Psoas muscle (tissue), 8 donors: ENCODE measurements at regions of chr17 and their contacts with region 1.

Region 1: GRCh38 chr17:68512247-68512982 is at the start of gene PRKAR1A:
- DNase-seq: peak; percentile 93 to 97
- ATAC-seq: peak; percentile 68 to 84 (median 82)
- H3K4me3 ChIP-seq: peak within 1 kb of the TSS; percentile 90
- H3K27ac ChIP-seq: peak within 1 kb of the TSS; percentile 98
- H3K4me1 ChIP-seq: peaks cover 29% of the 10 kb centered on the region
- H3K27me3 ChIP-seq: no peaks in the 10 kb centered on the region
- CTCF ChIP-seq: no peak
- total RNA-seq, gene PRKAR1A: 304 to 2,295 (median 488) TPM

Region 2: DNA sequence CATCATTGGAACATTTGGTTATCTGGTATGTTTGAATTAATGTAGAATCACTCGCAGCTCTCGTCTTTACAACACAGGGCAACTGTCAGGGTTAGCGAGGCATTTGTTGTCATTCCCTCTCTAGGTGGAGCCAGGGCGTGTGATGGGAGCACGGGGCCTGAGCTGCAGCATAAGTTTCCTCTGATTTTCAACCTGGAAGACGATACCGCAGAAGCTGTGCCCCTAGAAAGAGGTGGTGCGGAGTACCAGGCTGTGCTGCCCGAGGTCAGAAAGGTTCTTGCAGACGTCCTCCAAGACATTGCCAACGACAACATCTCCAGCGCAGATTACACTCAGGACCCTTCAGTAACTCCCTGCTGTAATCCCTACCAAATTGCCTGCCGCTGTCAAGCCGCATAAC is 92.3 kb before region 1 on chr17:
- intact Hi-C with region 1: no loop called
- DNase-seq: no peak
- ATAC-seq: no peak
- H3K4me3 ChIP-seq: no peak overlapping the region
- H3K27ac ChIP-seq: no peak overlapping the region
- H3K4me1 ChIP-seq: no peaks in the 10 kb centered on the region
- H3K27me3 ChIP-seq: no peaks in the 10 kb centered on the region
- CTCF ChIP-seq: no peak

Region 3: DNA sequence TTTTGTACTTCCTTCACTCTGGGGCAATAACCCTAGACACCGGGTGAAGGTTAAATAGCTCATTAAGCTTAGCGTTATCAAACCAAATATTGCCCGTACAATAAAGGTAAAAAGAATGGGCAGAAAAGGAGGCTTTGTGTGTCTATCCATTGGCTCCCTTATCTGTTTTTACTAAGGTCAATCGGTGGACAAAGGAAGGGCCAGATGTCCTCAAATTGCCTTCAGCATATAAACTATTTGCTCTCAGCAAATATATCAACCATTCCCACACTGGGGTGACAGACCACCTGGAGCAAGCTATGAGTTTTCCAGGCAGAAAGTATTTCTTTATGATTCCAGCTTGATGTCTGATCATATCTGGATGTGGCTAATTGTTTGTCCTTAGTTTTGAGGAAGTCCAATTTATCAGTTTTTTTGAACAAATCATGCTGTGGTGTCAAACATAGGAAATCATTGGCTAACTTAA is 29.8 kb before region 1 on chr17:
- intact Hi-C with region 1: loop called in 1 of 2 experiments (anchors 2 kb)
- DNase-seq: no peak
- ATAC-seq: no peak
- H3K4me3 ChIP-seq: no peak overlapping the region
- H3K27ac ChIP-seq: no peak overlapping the region
- H3K4me1 ChIP-seq: no peaks in the 10 kb centered on the region
- H3K27me3 ChIP-seq: no peaks in the 10 kb centered on the region
- CTCF ChIP-seq: no peak

Region 4: GRCh38 chr17:68704871-68705713 is 192.7 kb after region 1 on chr17:
- intact Hi-C with region 1: no loop called
- DNase-seq: peak in 1 of 2 donors; percentile 18
- ATAC-seq: peak; percentile 21 to 62 (median 44)
- H3K4me3 ChIP-seq: no peak overlapping the region
- H3K27ac ChIP-seq: no peak overlapping the region
- H3K4me1 ChIP-seq: no peaks in the 10 kb centered on the region
- H3K27me3 ChIP-seq: no peaks in the 10 kb centered on the region
- CTCF ChIP-seq: no peak

Region 5: GRCh38 chr17:68733241-68734176 is 221.1 kb after region 1 on chr17:
- intact Hi-C with region 1: no loop called
- DNase-seq: no peak
- ATAC-seq: no peak
- H3K4me3 ChIP-seq: no peak overlapping the region
- H3K27ac ChIP-seq: no peak overlapping the region
- H3K4me1 ChIP-seq: no peaks in the 10 kb centered on the region
- H3K27me3 ChIP-seq: no peaks in the 10 kb centered on the region
- CTCF ChIP-seq: no peak